Calu3 (cell line): ENCODE measurements at regions of chr10 and their contacts with region 1.

Region 1: GRCh38 chr10:101782811-101783735 is at the start of gene NPM3:
- DNase-seq: peak; percentile 84
- H3K4me3 Mint-ChIP-seq: peak within 1 kb of the TSS; percentile 97
- H3K27ac Mint-ChIP-seq: peak within 1 kb of the TSS; percentile 97
- H3K4me1 Mint-ChIP-seq: peaks cover 44% of the 10 kb centered on the region
- H3K27me3 Mint-ChIP-seq: peaks cover 14% of the 10 kb centered on the region
- CTCF ChIP-seq: no peak
- total RNA-seq, gene NPM3: 51.1 and 51.5 TPM in 2 replicates

Region 2: DNA sequence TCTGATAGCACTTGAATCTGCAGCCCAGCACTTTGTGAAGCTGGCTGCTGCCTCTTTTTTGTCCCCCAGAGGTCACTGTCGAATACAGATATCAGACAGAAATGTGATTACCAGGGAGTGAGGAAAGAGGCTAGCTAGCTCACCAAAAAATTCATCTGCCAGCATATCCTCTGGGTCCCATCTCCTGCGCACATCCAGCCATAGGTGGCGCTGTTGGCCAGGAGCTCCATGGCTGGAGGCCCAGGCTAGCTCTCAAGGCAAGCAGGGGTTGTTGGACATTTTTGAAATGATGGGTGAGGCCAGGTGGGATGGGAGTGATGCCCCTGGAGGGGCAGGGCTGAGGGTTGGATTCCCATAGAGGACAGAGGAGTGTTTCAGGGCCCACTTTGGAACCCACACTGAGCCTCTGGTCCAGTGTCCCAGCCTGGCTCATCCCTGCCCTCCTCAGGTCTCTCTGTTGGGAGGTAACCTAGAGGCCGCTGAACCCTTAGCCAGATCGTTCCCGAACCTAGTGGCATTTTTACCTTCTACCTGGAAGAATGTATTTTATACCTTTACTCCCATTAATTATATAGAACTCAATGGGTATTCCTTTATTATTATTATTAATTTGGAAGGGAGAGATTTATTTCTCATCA is 180.2 kb before region 1 on chr10:
- CTCF ChIA-PET with region 1: interaction called, 34 read pairs
- intact Hi-C with region 1: loop called (anchors 2 kb)
- DNase-seq: peak; percentile 70
- H3K4me3 Mint-ChIP-seq: no peak overlapping the region
- H3K27ac Mint-ChIP-seq: no peak overlapping the region
- H3K4me1 Mint-ChIP-seq: no peaks in the 10 kb centered on the region
- H3K27me3 Mint-ChIP-seq: no peaks in the 10 kb centered on the region
- CTCF ChIP-seq: peak; percentile 52